Right ventricle myocardium superior (tissue), 1 donor: ENCODE measurements at regions of chr15 and their contacts with region 1.

Region 1: DNA sequence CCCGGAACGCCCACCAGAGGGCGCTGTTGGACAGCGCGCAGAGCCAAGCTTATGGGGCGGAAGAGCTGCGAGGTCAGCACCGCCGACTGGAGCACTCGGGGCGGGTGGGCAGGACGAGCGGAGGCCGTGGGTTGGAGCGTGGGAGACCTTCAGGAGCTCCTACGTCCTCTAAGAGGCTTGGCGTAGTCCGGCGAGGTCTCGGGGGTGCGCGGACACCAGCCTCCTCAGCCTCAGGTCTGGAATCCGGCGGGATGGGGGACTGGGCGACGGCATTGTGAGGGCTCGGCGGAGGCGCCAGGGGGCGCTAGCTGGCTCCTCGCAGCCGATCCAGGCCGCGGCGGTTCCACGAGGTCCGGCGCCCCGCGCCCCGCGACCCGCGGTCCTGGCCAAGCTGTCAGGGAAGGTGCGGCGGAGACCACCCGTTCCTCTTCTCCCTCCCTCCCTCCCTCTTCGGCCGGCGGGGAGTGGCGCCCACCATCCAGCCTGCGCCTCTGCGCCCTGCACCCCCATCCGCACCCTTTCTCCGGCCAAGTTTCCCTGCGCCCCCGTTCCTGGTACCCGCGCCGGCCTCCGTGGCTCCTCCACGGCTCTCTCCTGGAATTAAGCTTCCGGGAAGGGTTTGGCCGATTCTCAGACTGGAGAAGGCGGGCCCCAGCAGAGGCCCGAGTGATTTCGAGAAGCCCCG is 24.3 kb upstream of the POLG start:
- DNase-seq: peak; percentile 85
- ATAC-seq: peak; percentile 96

Region 2: GRCh38 chr15:89430530-89431341 is 71.8 kb after region 1 on chr15:
- intact Hi-C with region 1: loop called (anchors 1 kb)
- DNase-seq: peak; percentile 92
- ATAC-seq: peak; percentile 97

Region 3: DNA sequence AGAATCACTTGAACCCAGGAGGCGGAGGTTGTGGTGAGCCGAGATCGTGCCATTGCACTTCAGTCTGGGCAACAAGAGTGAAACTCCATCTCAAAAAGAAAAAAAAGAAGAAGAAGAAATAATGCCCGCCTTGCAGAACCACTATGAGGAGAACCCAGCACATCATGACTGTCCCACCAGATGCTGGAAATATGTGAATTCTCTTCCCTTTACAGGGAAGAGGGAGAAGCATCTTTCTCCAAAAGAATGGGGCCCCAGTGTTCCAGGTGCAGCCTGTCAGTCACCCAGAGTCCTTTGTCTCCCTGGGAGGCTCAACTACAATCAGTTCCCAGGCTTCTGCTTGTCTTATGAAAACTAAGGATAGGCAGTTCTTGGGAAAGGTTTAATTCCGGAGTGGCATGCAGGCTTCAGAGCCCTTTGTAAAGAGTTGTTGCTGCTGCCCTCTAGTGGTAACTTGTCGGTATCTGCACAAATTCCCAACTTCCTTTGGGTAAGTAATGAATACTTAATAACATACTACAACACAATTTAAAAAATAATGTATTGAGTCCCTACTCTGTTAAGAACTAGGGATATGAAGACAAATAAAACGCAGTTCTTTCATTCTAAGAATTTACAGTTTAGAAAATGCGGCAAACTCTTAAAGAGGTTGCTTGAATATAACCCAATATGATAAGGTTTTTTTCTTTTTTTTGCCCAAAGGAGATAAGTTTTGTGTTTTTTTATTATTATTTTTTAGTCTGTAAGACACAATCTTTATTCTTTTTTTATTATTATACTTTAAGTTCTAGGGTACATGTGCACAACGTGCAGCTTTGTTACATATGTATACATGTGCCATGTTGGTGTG is 197.7 kb after region 1 on chr15:
- intact Hi-C with region 1: loop called (anchors 5 kb)
- DNase-seq: no peak
- ATAC-seq: peak; percentile 58